ENCODE measurements at regions of chr14 and their contacts with region 1.

Region 1: DNA sequence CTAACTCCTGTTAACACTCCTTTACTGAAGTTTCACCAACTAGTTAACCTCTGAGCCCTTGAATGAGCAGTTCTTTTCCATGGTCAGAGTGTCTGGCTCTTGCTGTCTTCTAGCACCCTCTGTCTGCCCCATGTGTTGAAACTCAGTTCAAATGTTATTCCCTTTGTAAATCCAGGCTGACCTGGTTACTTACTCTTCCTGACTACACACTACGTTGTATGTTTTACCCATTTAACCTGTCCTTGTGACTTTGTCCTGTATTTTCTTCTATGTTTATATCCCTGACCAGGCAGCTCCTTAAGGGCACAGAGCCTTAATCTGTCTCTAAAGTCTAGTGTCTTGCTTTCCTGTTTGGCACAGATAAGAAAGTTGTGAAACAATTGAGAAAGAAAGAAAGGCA is 389.0 kb upstream of the RPL10L start:
- DNase-seq: no peak
- H3K4me3 ChIP-seq: no peak overlapping the region
- H3K27ac ChIP-seq: no peak overlapping the region
- H3K4me1 ChIP-seq: no peaks in the 10 kb centered on the region
- H3K27me3 ChIP-seq: no peaks in the 10 kb centered on the region
- CTCF ChIP-seq: no peak
- POLR2A ChIP-seq: no peak

Region 2: GRCh38 chr14:47207617-47208016 is 167.1 kb after region 1 on chr14:
- intact Hi-C with region 1: loop called in 1 of 2 experiments (anchors 10 kb)
- DNase-seq: no peak
- H3K4me3 ChIP-seq: no peak overlapping the region
- H3K27ac ChIP-seq: no peak overlapping the region
- H3K4me1 ChIP-seq: no peaks in the 10 kb centered on the region
- H3K27me3 ChIP-seq: no peaks in the 10 kb centered on the region
- CTCF ChIP-seq: no peak
- POLR2A ChIP-seq: no peak

Region 3: GRCh38 chr14:48788771-48789170 is 1748.2 kb after region 1 on chr14:
- intact Hi-C with region 1: no loop called
- DNase-seq: no peak
- H3K4me3 ChIP-seq: no peak overlapping the region
- H3K27ac ChIP-seq: no peak overlapping the region
- H3K4me1 ChIP-seq: no peaks in the 10 kb centered on the region
- H3K27me3 ChIP-seq: no peaks in the 10 kb centered on the region
- CTCF ChIP-seq: no peak
- POLR2A ChIP-seq: no peak